Posterior vena cava (tissue), 2 donors: ENCODE measurements at regions of chr11 and their contacts with region 1.

Region 1: DNA sequence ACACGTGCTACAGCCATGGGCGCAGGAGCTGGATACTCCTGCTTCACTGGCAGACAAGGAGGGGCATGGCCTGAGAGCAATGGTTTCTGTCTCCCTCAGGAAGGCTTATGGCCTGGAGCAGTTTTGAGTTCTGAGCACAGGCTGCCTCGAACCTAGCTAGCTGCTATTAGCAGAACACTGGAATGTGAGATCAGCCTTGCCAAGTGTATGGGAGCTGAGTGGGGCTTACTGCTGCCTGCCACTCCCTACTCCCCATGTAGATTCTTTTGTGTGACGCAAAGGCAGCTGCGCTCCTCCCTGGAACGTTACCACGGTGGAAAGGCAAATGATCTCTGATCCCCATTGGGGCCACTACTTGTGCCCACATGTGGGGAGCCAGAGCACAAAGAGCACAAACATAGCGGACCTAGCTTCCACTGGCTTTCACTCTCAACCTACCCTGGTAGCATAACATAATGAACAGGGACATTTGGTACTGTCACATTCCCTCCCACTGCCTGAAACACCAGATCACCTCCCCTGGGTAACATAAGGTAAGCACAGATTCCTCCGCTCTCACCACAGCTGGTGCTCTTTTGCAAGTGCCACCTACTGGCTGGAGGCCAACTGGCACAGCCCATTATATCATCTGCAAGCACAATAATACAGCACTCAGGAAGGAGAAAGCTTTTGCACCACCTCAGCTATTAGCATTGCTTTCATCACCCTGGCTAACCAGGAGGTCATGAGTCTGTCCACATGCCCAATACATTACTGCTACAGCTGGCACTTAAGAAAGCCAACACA is 84.6 kb upstream of the GUCY1A2 start:
- DNase-seq: no peak

Region 2: DNA sequence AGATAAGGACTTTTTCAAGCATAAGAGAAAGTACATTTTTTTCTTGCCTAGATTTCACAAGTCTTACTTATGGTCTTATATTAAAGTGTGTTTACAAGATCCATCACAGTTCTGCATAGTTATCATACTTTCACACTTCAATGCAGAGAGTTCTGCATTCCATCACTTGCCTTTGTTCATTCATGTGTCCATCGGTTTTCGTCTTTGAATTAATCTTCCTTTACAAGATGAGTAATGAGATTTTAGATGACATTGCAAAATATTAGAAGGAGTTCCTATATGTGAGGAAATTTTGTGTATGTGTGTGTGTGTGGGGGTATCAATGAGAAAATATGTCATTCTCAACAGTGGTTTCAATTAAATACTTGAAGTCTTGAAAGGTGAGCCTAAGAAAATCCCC is 13.5 kb after region 1 on chr11:
- intact Hi-C with region 1: loop called in 1 of 2 experiments (anchors 1 kb)
- DNase-seq: no peak